ENCODE measurements at regions of chr14 and their contacts with region 1.

Region 1: GRCh38 chr14:100108042-100108825 is 43.0 kb downstream of the EVL start:
- DNase-seq: peak; percentile 82
- ATAC-seq: peak; percentile 85
- H3K4me3 ChIP-seq: no peak overlapping the region
- H3K4me3 Mint-ChIP-seq: no peak overlapping the region
- H3K27ac ChIP-seq: peak overlapping the region; percentile 27 to 56
- H3K27ac Mint-ChIP-seq: peak overlapping the region; percentile 84
- H3K4me1 ChIP-seq: peaks cover 12 to 32% of the 10 kb centered on the region in 2 donors
- H3K4me1 Mint-ChIP-seq: peaks cover 51% of the 10 kb centered on the region
- H3K27me3 ChIP-seq: no peaks in the 10 kb centered on the region
- H3K27me3 Mint-ChIP-seq: no peaks in the 10 kb centered on the region
- CTCF ChIP-seq: peak; percentile 82

Region 2: DNA sequence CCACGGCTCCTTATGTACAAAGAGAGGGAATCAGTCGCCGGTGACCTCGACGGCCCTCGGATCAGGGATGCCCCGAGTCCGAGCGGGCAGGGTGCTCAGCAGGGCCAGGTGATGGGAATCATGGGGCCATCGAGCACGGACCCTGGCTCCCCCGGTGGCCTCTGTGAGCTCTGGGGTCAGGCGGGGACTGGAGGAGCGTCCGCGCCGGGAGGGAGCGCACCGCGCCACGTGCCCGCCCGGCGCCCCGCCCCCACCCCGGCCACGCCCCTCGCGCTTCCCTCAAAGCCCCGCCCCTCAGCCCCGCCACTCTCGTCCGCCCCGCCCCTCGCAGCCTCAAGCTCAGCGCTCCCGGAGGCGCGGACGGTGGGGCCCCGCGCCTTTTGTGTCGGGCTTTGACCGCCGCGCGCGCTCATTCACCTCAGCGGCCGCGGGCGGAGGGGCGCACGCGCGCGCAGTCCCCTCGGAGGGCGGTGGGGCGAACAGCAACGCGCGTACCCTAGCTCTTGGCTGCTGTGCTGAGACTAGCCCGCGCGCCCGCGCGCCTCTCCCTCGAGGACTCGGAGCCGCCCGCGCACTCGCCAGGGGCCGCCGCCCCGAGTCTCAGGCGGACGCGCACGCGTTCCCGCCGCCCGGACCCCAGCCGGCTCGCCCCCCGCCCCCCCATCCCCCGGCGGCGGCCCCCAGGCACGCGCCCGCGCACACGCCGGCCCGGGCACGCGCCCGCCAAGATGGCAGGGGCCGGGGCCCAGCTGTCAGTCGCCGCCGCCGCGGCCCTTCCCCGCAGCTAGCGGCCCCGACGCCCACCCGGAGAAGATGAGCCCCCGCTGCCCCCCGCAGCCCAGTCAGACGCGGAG is 136.9 kb before region 1 on chr14:
- CTCF ChIA-PET with region 1: no interaction called
- POLR2A ChIA-PET with region 1: no interaction called
- intact Hi-C with region 1: no loop called
- DNase-seq: peak; percentile 82
- ATAC-seq: peak; percentile 86
- H3K4me3 ChIP-seq: peak overlapping the region in 4 of 5 experiments; percentile 31 to 64 (median 61)
- H3K4me3 Mint-ChIP-seq: peak overlapping the region; percentile 83
- H3K27ac ChIP-seq: no peak overlapping the region
- H3K27ac Mint-ChIP-seq: no peak overlapping the region
- H3K4me1 ChIP-seq: peaks cover 12 to 14% of the 10 kb centered on the region in 2 donors
- H3K4me1 Mint-ChIP-seq: peaks cover 9% of the 10 kb centered on the region
- H3K27me3 ChIP-seq: peaks cover 0 to 50% (median 8%) of the 10 kb centered on the region in 4 experiments
- H3K27me3 Mint-ChIP-seq: peaks cover 58% of the 10 kb centered on the region
- CTCF ChIP-seq: no peak

Region 3: DNA sequence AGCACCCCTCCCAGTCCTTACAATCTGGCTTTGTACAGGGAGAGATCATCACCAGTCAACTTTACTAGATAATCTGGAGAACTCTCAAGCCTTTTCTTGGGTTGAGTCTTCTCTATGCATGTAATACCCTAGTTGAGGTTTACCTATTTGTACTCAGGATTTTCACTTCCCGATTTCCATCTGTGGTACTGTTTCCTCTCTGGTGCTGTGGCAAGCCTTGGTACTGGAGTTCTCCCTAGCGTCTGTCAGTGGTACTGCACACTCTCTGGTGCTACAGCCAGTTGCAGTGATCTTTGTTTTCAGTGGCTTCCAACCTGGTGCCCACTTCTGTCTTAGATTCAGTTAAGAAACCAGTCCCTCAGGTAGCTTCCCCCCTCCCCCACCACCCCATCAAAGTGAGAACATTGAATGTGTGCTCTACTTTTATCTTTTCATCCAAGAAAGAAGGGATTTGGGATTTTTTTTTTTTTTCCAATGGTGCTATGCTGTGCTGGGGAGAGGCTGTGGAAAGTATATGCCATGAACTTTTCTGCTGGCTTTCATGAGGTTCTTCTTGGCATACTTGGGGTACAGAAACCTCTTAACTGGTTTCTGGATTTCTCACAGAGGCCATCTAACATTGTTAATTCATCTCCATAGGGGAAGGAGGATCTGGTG is 112.4 kb before region 1 on chr14:
- CTCF ChIA-PET with region 1: interaction called, 5 read pairs
- POLR2A ChIA-PET with region 1: no interaction called
- intact Hi-C with region 1: loop called (anchors 5 kb)
- DNase-seq: peak; percentile 87
- ATAC-seq: peak; percentile 100
- H3K4me3 ChIP-seq: no peak overlapping the region
- H3K4me3 Mint-ChIP-seq: no peak overlapping the region
- H3K27ac ChIP-seq: no peak overlapping the region
- H3K27ac Mint-ChIP-seq: no peak overlapping the region
- H3K4me1 ChIP-seq: peaks cover 8 to 9% of the 10 kb centered on the region in 2 donors
- H3K4me1 Mint-ChIP-seq: peaks cover 8% of the 10 kb centered on the region
- H3K27me3 ChIP-seq: no peaks in the 10 kb centered on the region
- H3K27me3 Mint-ChIP-seq: peaks cover 19% of the 10 kb centered on the region
- CTCF ChIP-seq: peak; percentile 89

Region 4: DNA sequence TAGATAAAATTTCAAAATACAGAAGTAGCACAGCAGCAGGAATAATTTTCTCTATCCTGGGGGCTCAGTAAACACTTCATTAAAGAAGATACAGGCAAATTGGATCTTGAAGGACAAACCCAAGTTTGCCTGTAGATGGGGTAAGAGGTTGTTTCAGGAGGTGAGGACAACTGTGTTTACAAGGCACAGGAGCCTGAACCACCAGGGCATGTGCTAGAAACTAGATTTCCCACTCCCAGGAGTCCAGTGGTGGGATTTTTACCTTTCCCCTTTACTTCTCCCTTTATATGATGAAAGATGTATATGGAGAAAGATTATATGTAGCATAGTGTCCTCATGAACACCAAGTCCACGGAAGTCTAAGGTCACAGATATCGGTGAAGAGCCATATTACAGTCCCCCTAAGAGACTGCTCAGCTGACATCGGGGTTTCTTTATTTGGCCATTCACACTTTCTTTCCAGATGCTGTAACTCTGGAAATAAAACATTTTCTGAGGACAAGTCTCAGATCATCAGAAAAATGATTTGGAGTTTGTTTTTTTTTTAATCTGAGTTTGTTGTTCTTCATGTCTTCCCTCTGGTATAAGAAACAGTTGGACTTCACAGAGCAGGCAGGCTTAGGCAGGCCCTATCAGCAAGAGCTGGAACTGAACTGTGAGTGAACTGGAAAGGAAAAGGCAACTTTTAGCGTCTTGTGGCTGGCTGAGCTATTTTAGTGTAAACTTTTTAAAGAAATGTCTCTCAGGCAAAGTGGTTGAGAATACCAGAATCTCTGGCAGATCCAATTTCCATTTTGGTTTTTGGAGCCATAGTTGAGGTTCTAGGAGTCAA is 51.1 kb before region 1 on chr14:
- CTCF ChIA-PET with region 1: interaction called, 495 read pairs
- POLR2A ChIA-PET with region 1: no interaction called
- intact Hi-C with region 1: loop called (anchors 1 kb)
- DNase-seq: peak; percentile 66
- ATAC-seq: peak; percentile 77
- H3K4me3 ChIP-seq: no peak overlapping the region
- H3K4me3 Mint-ChIP-seq: no peak overlapping the region
- H3K27ac ChIP-seq: no peak overlapping the region
- H3K27ac Mint-ChIP-seq: peak overlapping the region; percentile 57
- H3K4me1 ChIP-seq: peaks cover 16% of the 10 kb centered on the region in 2 donors
- H3K4me1 Mint-ChIP-seq: peaks cover 31% of the 10 kb centered on the region
- H3K27me3 ChIP-seq: no peaks in the 10 kb centered on the region
- H3K27me3 Mint-ChIP-seq: no peaks in the 10 kb centered on the region
- CTCF ChIP-seq: peak; percentile 69

Region 5: GRCh38 chr14:100078991-100079725 is 29.1 kb before region 1 on chr14:
- CTCF ChIA-PET with region 1: interaction called, 495 read pairs
- POLR2A ChIA-PET with region 1: interaction called, 3 read pairs
- intact Hi-C with region 1: loop called (anchors 1 kb)
- DNase-seq: peak; percentile 27
- ATAC-seq: peak; percentile 44
- H3K4me3 ChIP-seq: no peak overlapping the region
- H3K4me3 Mint-ChIP-seq: peak overlapping the region; percentile 68
- H3K27ac ChIP-seq: peak overlapping the region in 1 of 2 donors; percentile 65
- H3K27ac Mint-ChIP-seq: peak overlapping the region; percentile 85
- H3K4me1 ChIP-seq: peaks cover 82 to 84% of the 10 kb centered on the region in 2 donors
- H3K4me1 Mint-ChIP-seq: peaks cover 85% of the 10 kb centered on the region
- H3K27me3 ChIP-seq: no peaks in the 10 kb centered on the region
- H3K27me3 Mint-ChIP-seq: no peaks in the 10 kb centered on the region
- CTCF ChIP-seq: no peak

Region 6: GRCh38 chr14:100155042-100155846 is 47.0 kb after region 1 on chr14:
- CTCF ChIA-PET with region 1: interaction called, 5 read pairs
- POLR2A ChIA-PET with region 1: no interaction called
- intact Hi-C with region 1: loop called (anchors 5 kb)
- DNase-seq: no peak
- ATAC-seq: no peak
- H3K4me3 ChIP-seq: no peak overlapping the region
- H3K4me3 Mint-ChIP-seq: no peak overlapping the region
- H3K27ac ChIP-seq: no peak overlapping the region
- H3K27ac Mint-ChIP-seq: peak overlapping the region; percentile 53
- H3K4me1 ChIP-seq: peaks cover 29 to 39% of the 10 kb centered on the region in 2 donors
- H3K4me1 Mint-ChIP-seq: peaks cover 33% of the 10 kb centered on the region
- H3K27me3 ChIP-seq: peaks cover 0 to 2% (median 0%) of the 10 kb centered on the region in 4 experiments
- H3K27me3 Mint-ChIP-seq: no peaks in the 10 kb centered on the region
- CTCF ChIP-seq: peak; percentile 65

Region 7: DNA sequence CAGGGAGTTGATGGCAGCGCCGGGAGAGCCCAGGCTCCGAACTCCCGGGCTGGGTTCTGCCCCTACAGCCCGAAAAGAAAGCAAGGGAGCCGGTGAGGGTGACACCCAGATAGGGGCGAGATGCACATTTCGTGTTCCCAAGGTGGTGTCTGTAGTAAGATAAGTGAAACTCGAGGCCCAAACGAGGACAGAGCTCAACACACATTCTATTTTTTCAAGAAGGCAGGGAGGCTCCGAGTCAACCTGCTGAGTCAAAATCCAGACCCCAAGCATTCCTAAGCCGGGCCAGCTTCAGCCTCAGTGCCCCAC is 106.5 kb after region 1 on chr14:
- CTCF ChIA-PET with region 1: no interaction called
- POLR2A ChIA-PET with region 1: no interaction called
- intact Hi-C with region 1: no loop called
- DNase-seq: no peak
- ATAC-seq: no peak
- H3K4me3 ChIP-seq: peak overlapping the region in 4 of 5 experiments; percentile 79 to 91 (median 90)
- H3K4me3 Mint-ChIP-seq: peak overlapping the region; percentile 87
- H3K27ac ChIP-seq: peak overlapping the region; percentile 62 to 77
- H3K27ac Mint-ChIP-seq: peak overlapping the region; percentile 89
- H3K4me1 ChIP-seq: peaks cover 12 to 15% of the 10 kb centered on the region in 2 donors
- H3K4me1 Mint-ChIP-seq: peaks cover 16% of the 10 kb centered on the region
- H3K27me3 ChIP-seq: no peaks in the 10 kb centered on the region
- H3K27me3 Mint-ChIP-seq: no peaks in the 10 kb centered on the region
- CTCF ChIP-seq: no peak

Region 8: GRCh38 chr14:100828031-100828769 is 720.0 kb after region 1 on chr14:
- CTCF ChIA-PET with region 1: no interaction called
- POLR2A ChIA-PET with region 1: no interaction called
- intact Hi-C with region 1: no loop called
- DNase-seq: no peak
- ATAC-seq: no peak
- H3K4me3 ChIP-seq: no peak overlapping the region
- H3K4me3 Mint-ChIP-seq: no peak overlapping the region
- H3K27ac ChIP-seq: no peak overlapping the region
- H3K27ac Mint-ChIP-seq: no peak overlapping the region
- H3K4me1 ChIP-seq: no peaks in the 10 kb centered on the region
- H3K4me1 Mint-ChIP-seq: peaks cover 2% of the 10 kb centered on the region
- H3K27me3 ChIP-seq: peaks cover 0 to 13% (median 0%) of the 10 kb centered on the region in 4 experiments
- H3K27me3 Mint-ChIP-seq: peaks cover 21% of the 10 kb centered on the region
- CTCF ChIP-seq: no peak